ENCODE measurements at regions of chr10 and their contacts with region 1.

Region 1: DNA sequence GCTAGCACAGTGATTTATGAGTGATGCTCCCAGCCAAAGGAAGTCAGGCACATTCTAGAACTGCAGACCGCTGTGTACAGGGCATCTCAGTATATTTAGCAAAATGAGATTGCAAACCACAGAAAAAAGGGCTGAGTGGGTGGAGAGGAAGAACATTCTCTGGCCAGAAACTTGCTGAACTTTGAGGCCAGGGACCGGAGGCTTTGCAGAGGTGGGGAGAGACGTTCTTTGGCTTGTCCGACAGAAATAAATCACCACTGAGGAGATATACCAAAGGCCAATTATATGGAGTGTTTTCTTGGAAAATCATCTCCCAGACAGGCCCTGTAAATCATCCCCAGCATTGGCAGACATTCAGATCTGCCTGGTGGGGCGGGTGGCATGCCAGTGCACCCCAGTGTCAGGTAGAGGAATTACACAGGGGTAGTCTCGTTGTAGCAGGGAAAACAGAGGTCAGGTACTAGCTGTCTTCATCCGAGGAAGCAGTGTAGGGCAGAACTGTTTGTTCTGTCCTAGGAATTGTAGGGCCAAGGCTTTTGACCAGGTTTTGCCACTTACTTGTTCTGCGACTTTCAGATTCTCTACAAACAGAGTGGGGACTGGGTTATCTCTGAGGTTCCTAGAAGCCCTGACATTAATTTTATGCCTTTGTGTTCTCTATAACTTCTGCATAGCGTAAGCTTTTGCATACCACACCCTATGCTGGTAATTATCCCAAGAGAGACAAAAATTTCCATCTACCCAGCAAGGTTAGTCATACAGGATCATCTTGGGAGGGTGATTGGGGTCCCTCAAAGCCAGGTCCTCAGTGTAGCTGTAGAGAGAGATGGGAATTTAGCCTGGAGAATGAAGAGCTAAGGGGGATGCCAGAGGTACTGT is 655.6 kb downstream of the LRMDA start:
- DNase-seq: peak; percentile 89
- H3K4me3 ChIP-seq: no peak overlapping the region
- H3K27ac ChIP-seq: peak overlapping the region; percentile 60 to 78 (median 74)
- H3K4me1 ChIP-seq: peaks cover 0 to 32% (median 24%) of the 10 kb centered on the region in 4 donors
- H3K27me3 ChIP-seq: no peaks in the 10 kb centered on the region
- CTCF ChIP-seq: peak; percentile 64 to 89 (median 78)
- EP300 ChIP-seq: peak in 3 of 4 donors; percentile 48 to 75 (median 58)
- POLR2A ChIP-seq: no peak

Region 2: GRCh38 chr10:75662715-75663114 is 424.3 kb before region 1 on chr10:
- intact Hi-C with region 1: loop called (anchors 10 kb)
- DNase-seq: peak; percentile 90
- H3K4me3 ChIP-seq: no peak overlapping the region
- H3K27ac ChIP-seq: peak overlapping the region; percentile 72 to 86 (median 82)
- H3K4me1 ChIP-seq: peaks cover 0 to 47% (median 33%) of the 10 kb centered on the region in 4 donors
- H3K27me3 ChIP-seq: no peaks in the 10 kb centered on the region
- CTCF ChIP-seq: no peak
- EP300 ChIP-seq: peak in 3 of 4 donors; percentile 76 to 81 (median 77)
- POLR2A ChIP-seq: no peak

Region 3: DNA sequence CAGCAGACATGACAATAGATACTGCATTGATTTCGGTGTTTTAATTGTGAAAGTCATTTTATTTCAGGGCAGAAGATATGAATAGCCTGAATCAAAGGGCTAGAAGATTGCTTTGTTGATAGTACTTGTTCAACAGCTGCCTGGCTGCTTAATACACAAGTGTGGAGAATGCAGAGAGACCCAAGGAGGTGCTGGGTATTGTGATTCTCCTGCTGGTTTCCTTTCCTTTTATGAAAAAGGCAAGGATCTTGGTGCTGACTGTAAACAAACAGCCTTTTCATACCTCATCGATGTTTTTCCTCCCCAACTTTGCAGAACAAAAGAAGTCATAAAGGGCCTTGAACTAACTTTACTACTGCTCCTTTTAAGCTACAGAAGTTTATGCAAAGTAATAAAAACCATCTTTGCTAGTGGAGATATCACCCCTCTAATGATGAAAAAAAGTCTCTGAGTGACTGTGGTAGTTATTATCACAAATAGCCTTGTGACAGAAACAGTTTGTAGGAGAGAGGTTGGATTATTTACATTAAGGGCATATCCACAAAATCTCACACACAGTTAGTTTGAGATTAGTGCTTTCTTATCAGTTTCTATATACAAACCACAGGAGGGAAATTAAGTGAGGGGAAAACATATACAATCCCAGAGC is 144.4 kb after region 1 on chr10:
- intact Hi-C with region 1: no loop called
- DNase-seq: no peak
- H3K4me3 ChIP-seq: no peak overlapping the region
- H3K27ac ChIP-seq: no peak overlapping the region
- H3K4me1 ChIP-seq: peaks cover 0 to 14% (median 12%) of the 10 kb centered on the region in 4 donors
- H3K27me3 ChIP-seq: no peaks in the 10 kb centered on the region
- CTCF ChIP-seq: no peak
- EP300 ChIP-seq: no peak
- POLR2A ChIP-seq: no peak

Region 4: GRCh38 chr10:76547352-76547972 is 460.5 kb after region 1 on chr10:
- intact Hi-C with region 1: no loop called
- DNase-seq: peak; percentile 89
- H3K4me3 ChIP-seq: no peak overlapping the region
- H3K27ac ChIP-seq: no peak overlapping the region
- H3K4me1 ChIP-seq: peaks cover 0 to 78% (median 55%) of the 10 kb centered on the region in 4 donors
- H3K27me3 ChIP-seq: no peaks in the 10 kb centered on the region
- CTCF ChIP-seq: peak; percentile 67 to 84 (median 76)
- EP300 ChIP-seq: no peak
- POLR2A ChIP-seq: no peak

Region 5: GRCh38 chr10:77004917-77005564 is 918.0 kb after region 1 on chr10:
- intact Hi-C with region 1: loop called (anchors 10 kb)
- DNase-seq: no peak
- H3K4me3 ChIP-seq: no peak overlapping the region
- H3K27ac ChIP-seq: peak overlapping the region in 3 of 4 donors; percentile 50 to 57 (median 53)
- H3K4me1 ChIP-seq: peaks cover 0 to 39% (median 25%) of the 10 kb centered on the region in 4 donors
- H3K27me3 ChIP-seq: no peaks in the 10 kb centered on the region
- CTCF ChIP-seq: peak; percentile 76 to 85 (median 82)
- EP300 ChIP-seq: no peak
- POLR2A ChIP-seq: no peak